ENCODE measurements at regions of chr14 and their contacts with region 1.

Region 1: GRCh38 chr14:44383636-44384035 is 123.4 kb downstream of the FSCB start:
- DNase-seq: no peak
- ATAC-seq: no peak
- H3K4me3 ChIP-seq: no peak overlapping the region
- H3K27ac ChIP-seq: no peak overlapping the region
- H3K4me1 ChIP-seq: no peaks in the 10 kb centered on the region
- H3K27me3 ChIP-seq: no peaks in the 10 kb centered on the region
- CTCF ChIP-seq: no peak

Region 2: DNA sequence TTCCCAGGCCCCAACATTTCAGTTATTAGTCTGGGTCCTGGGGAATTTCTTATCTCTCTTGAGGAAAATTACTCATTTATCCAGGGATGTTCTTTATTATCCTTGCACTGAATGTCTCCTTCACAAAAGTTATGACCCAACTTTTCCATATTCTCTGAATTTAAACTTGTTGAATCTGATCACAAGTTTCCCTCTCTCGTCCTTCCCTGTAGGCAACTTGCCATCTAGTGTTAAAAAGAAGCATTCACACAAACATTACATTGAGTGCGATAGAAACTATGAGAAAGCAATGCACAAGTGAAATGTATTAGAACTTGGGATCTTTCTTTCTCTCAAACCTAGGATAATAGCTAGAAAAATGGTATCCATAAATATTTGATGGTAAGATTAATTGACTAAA is 484.9 kb before region 1 on chr14:
- CTCF ChIA-PET with region 1: no interaction called
- POLR2A ChIA-PET with region 1: no interaction called
- in situ Hi-C with region 1: no loop called
- intact Hi-C with region 1: no loop called
- DNase-seq: no peak
- ATAC-seq: no peak
- H3K4me3 ChIP-seq: no peak overlapping the region
- H3K27ac ChIP-seq: no peak overlapping the region
- H3K4me1 ChIP-seq: no peaks in the 10 kb centered on the region; the same call in 1 of the 2 replicates
- H3K27me3 ChIP-seq: no peaks in the 10 kb centered on the region
- CTCF ChIP-seq: no peak

Region 3: GRCh38 chr14:44369401-44370123 is 14.1 kb before region 1 on chr14:
- CTCF ChIA-PET with region 1: no interaction called
- POLR2A ChIA-PET with region 1: no interaction called
- in situ Hi-C with region 1: no loop called
- intact Hi-C with region 1: no loop called
- DNase-seq: no peak
- ATAC-seq: no peak
- H3K4me3 ChIP-seq: no peak overlapping the region
- H3K27ac ChIP-seq: no peak overlapping the region
- H3K4me1 ChIP-seq: no peaks in the 10 kb centered on the region
- H3K27me3 ChIP-seq: no peaks in the 10 kb centered on the region
- CTCF ChIP-seq: no peak

Region 4: GRCh38 chr14:44897045-44897844 is 513.6 kb after region 1 on chr14:
- CTCF ChIA-PET with region 1: no interaction called
- POLR2A ChIA-PET with region 1: interaction called, 10 read pairs
- in situ Hi-C with region 1: no loop called
- intact Hi-C with region 1: no loop called
- DNase-seq: peak; percentile 71
- ATAC-seq: peak; percentile 97
- H3K4me3 ChIP-seq: peak overlapping the region; percentile 62 to 69
- H3K27ac ChIP-seq: peak overlapping the region; percentile 86
- H3K4me1 ChIP-seq: no peaks in the 10 kb centered on the region
- H3K27me3 ChIP-seq: no peaks in the 10 kb centered on the region
- CTCF ChIP-seq: no peak

Measured in Panc1 (cell line).